MCF 10A (cell line): ENCODE measurements at regions of chr12 and their contacts with region 1.

Region 1: DNA sequence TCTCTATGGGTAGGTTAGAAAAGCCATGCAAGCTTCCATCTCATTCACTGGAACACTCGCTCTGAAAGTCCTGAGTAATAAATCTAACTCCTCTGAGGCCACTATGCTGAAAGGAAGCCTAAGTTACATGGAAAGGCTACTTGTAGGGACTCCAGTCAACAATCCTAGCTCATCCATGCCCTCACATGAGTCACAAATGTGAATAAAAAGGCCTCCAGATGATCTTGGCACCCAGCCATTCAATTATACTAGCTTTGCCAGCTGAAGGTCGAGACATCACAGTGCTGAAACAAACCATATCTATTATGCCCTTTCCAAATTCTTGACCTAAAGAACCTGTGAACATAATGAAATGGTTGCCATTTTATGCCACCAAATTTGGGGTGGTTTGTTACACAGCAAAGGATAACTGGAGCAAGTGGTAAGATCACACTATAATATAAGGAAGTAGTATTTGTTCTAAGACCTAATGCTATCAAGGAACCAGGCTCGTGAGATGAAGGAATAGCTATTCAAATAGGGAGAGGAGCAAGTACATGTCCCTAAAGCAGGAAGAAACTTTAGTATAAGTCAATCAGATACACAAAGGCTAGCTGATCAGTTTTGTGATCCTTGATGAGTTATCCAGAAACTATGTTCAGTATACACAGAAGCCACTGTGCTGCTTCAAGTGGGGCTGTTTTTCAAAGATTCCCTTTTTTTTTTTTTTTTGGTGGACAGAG is 142.1 kb downstream of the MED13L start:
- DNase-seq: peak; percentile 93
- H3K4me3 Mint-ChIP-seq: no peak overlapping the region
- H3K27ac Mint-ChIP-seq: no peak overlapping the region
- H3K4me1 Mint-ChIP-seq: peaks cover 48% of the 10 kb centered on the region
- H3K27me3 Mint-ChIP-seq: no peaks in the 10 kb centered on the region
- CTCF ChIP-seq: no peak

Region 2: DNA sequence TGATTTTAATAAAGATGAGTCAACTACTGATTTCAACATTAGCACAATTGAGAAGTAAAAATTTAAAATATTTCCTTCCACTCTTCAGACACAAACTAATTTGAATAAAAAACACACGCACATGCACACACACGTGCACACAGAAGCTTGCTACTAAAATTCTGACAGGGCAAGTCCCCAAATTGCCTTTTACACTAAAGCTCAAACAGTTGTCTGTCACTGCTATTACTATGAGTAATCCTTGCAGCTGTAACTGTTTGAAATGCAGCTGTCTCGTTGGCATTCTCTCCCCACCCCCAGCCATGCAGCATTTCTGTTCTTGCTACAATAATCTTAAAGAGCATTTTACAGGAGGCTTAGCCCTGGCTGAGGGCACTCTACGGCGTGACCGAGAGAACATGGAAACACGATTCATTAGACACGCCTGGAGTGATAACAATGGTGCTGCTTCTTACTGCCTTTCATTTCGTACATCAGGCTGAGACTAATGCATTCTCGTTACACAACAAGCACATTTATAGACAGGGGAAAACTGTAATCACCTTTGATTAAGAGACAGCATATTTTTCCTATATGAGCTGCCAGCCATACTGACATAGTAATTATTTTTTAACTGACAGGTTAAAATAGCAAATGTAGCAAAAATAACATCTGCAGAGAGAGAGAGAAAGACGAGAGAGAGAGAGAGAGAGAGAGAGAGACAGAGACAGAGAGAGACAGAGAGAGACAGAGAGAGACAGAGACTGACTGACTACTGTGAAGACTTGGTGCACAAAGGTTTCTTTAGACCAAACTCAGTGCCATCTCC is 11.7 kb before region 1 on chr12:
- CTCF ChIA-PET with region 1: interaction called, 3 read pairs
- POLR2A ChIA-PET with region 1: interaction called, 17 read pairs
- intact Hi-C with region 1: no loop called
- DNase-seq: peak; percentile 69
- H3K4me3 Mint-ChIP-seq: peak overlapping the region; percentile 52
- H3K27ac Mint-ChIP-seq: peak overlapping the region; percentile 7
- H3K4me1 Mint-ChIP-seq: peaks cover 42% of the 10 kb centered on the region
- H3K27me3 Mint-ChIP-seq: no peaks in the 10 kb centered on the region
- CTCF ChIP-seq: no peak

Region 3: GRCh38 chr12:116955382-116956021 is 820.1 kb after region 1 on chr12:
- CTCF ChIA-PET with region 1: no interaction called
- POLR2A ChIA-PET with region 1: no interaction called
- intact Hi-C with region 1: no loop called
- DNase-seq: peak; percentile 71
- H3K4me3 Mint-ChIP-seq: no peak overlapping the region
- H3K27ac Mint-ChIP-seq: no peak overlapping the region
- H3K4me1 Mint-ChIP-seq: no peaks in the 10 kb centered on the region
- H3K27me3 Mint-ChIP-seq: no peaks in the 10 kb centered on the region
- CTCF ChIP-seq: peak; percentile 24